Right ventricle myocardium superior (tissue), 1 donor: ENCODE measurements at regions of chr2 and their contacts with region 1.

Region 1: DNA sequence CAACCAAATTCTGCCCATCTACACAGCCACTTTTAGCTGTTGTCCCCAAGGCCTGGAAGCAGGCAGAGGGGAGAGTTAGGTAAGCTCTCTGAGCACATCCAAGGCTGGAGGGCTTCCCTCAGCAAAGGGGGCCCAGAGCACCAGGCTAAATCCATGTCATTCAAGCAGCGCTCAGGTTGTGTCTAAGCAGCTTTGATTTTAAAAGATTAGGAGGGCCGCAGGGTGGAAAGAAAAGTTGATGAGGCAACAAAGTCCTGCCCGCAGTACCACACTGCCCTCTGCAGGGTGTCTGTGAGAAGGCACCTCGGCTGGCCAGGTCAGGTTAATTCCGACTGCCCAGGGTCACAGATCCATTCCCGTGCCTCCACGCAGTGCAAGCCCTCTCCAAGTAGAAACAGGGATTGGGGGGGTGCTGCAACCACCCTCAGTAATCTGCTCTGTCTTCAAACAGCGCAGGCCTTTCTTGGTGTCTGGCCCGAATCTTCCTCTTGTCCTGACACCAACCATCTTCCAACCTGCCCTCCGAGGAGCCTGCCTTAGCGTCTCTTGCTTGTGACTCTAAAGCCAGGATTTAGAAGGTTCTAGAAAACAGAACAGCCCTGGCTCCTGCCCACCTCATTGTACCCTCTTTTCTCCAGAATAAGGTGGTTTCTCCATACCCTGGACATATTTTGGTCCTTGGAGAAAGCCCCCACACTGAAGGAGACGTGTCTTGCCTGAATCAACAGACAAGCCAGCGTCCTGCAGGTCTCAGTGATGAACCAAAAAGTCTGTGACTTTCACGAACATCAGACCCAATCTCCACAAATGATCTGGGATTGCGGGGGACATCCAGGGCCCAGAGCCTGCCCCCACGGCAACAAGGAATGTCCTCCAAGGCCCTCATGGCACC is 289.2 kb downstream of the TNS1 start:
- DNase-seq: peak; percentile 84
- ATAC-seq: peak; percentile 91

Region 2: GRCh38 chr2:216683846-216684507 is 1029.7 kb before region 1 on chr2:
- intact Hi-C with region 1: loop called (anchors 5 kb)
- DNase-seq: peak; percentile 62
- ATAC-seq: peak; percentile 71

Region 3: GRCh38 chr2:217510771-217511291 is 202.8 kb before region 1 on chr2:
- intact Hi-C with region 1: loop called (anchors 10 kb)
- DNase-seq: peak; percentile 36
- ATAC-seq: peak; percentile 95

Region 4: GRCh38 chr2:217643789-217644301 is 69.8 kb before region 1 on chr2:
- intact Hi-C with region 1: no loop called
- DNase-seq: no peak
- ATAC-seq: peak; percentile 70

Region 5: GRCh38 chr2:217798743-217799562 is 85.3 kb after region 1 on chr2:
- intact Hi-C with region 1: no loop called
- DNase-seq: peak; percentile 47
- ATAC-seq: peak; percentile 11